Ascending aorta (tissue), 2 donors: ENCODE measurements at regions of chr12 and their contacts with region 1.

Region 1: DNA sequence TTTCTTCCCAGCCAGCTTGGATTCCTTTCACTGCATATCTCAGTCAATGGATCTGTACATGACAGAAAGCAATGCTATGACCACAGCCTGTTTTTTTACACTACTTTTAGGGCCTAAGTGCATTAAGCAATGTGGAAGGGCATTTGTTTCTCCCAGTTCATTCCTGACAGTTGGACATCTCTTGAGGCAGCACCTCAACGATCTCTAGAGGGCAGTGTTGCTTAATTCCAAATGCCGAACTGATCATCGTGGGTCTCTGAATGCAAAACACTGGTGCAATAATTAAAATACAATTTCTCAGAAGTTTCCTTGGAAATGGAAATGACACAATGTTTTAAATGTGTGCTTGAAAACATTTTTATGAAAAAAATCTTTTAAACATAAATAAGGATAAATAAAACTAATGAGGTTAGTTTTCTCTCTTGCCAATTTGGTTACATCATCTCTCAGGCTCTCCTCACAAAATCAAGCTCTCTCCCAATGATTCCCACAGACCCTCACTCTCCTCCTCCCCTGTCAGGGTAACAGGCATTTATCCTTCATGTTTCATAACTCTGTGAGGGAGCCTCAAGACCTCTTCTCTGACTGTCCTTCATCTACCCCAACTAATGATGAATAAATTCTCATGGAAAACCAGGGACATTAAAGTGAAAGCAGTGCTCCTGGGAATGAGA is 192.4 kb upstream of the SLC16A7 start:
- DNase-seq: peak in 1 of 2 donors; percentile 73
- H3K4me3 ChIP-seq: peak overlapping the region; percentile 7 to 14
- H3K27ac ChIP-seq: no peak overlapping the region
- H3K4me1 ChIP-seq: no peaks in the 10 kb centered on the region
- H3K27me3 ChIP-seq: no peaks in the 10 kb centered on the region
- CTCF ChIP-seq: peak; percentile 52 to 81 (median 60)

Region 2: DNA sequence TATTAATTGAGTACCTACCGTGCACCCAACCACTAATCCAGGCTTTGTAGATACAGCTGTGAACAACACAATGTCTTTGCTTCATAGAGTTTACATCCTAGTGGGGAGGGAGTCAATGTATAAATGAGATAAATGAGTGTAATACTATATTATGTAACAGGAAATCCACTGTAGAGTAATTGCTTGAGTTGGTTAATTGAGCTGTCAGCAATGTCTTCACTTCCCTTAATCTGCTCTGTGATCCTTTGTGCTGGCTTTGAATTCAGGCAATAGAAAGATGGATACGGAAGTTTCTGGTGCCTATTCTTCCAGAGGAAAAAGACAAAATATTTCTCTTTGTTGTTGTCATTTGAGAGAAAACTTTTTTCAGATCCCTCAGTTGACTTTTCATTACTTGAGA is 88.5 kb after region 1 on chr12:
- intact Hi-C with region 1: no loop called
- DNase-seq: no peak
- H3K4me3 ChIP-seq: no peak overlapping the region
- H3K27ac ChIP-seq: no peak overlapping the region
- H3K4me1 ChIP-seq: no peaks in the 10 kb centered on the region
- H3K27me3 ChIP-seq: no peaks in the 10 kb centered on the region
- CTCF ChIP-seq: no peak

Region 3: GRCh38 chr12:59808317-59808910 is 405.0 kb after region 1 on chr12:
- intact Hi-C with region 1: loop called (anchors 5 kb)
- DNase-seq: no peak
- H3K4me3 ChIP-seq: no peak overlapping the region
- H3K27ac ChIP-seq: no peak overlapping the region
- H3K4me1 ChIP-seq: no peaks in the 10 kb centered on the region
- H3K27me3 ChIP-seq: no peaks in the 10 kb centered on the region
- CTCF ChIP-seq: peak; percentile 39 to 74 (median 70)